CD4-positive, alpha-beta memory T cell (primary cell): ENCODE measurements at regions of chr16 and their contacts with region 1.

Region 1: GRCh38 chr16:25224731-25225319 is 8.1 kb downstream of the AQP8 start:
- DNase-seq: no peak
- H3K4me3 ChIP-seq: no peak overlapping the region
- H3K4me3 Mint-ChIP-seq: no peak overlapping the region
- H3K27ac ChIP-seq: no peak overlapping the region
- H3K27ac Mint-ChIP-seq: peak overlapping the region in 2 of 7 donors; percentile 54 to 85
- H3K4me1 ChIP-seq: no peaks in the 10 kb centered on the region
- H3K4me1 Mint-ChIP-seq: peaks cover 0 to 1% (median under 1%) of the 10 kb centered on the region in 4 donors
- H3K27me3 ChIP-seq: no peaks in the 10 kb centered on the region
- H3K27me3 Mint-ChIP-seq: no peaks in the 10 kb centered on the region

Region 2: GRCh38 chr16:24858219-24859041 is 366.4 kb before region 1 on chr16:
- CTCF ChIA-PET with region 1: no interaction called
- POLR2A ChIA-PET with region 1: no interaction called
- intact Hi-C with region 1: no loop called
- DNase-seq: peak; percentile 28 to 42 (median 34)
- H3K4me3 ChIP-seq: no peak overlapping the region
- H3K4me3 Mint-ChIP-seq: no peak overlapping the region
- H3K27ac ChIP-seq: no peak overlapping the region
- H3K27ac Mint-ChIP-seq: peak overlapping the region in 1 of 7 donors; percentile 14
- H3K4me1 ChIP-seq: no peaks in the 10 kb centered on the region
- H3K4me1 Mint-ChIP-seq: no peaks in the 10 kb centered on the region
- H3K27me3 ChIP-seq: no peaks in the 10 kb centered on the region
- H3K27me3 Mint-ChIP-seq: peaks cover 0 to 6% of the 10 kb centered on the region in 2 donors

Region 3: DNA sequence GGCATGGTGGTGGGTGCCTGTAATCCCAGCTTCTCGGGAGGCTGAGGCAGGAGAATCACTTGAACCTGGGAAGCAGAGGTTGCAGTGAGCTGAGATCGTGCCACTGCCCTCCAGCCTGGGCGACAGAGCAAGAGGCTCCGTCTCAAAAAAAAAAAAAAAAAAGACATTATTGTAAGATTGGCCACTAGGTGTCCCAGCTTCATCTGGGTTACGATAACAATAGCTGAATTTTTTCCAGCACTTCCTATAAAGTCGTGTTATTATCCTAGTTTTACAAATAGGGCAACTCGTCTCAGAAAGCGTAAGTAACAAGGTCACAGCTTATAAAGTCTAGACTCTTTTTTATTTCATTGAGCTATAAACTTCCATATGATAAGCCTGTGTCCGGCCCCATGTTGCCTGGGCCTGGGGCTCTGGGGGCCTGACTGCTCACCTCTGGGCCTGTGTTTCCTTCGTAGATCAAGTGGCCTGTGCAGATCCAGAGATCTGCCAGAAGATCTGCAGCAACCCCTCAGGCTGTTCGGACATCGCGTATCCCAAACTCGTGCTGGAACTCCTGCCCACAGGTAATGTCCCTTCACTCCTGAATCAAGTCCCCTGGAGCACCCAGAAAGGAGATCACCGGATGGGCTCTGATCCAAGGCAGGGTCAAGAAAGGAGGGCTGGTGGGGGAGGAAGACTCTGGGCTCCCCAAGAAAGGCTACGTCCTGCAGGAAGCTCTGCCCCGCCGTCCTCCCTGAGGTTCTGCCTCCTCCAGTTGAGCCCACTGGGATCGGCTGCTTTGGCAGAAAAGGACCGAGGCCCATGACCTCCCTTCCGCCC is 318.4 kb before region 1 on chr16:
- CTCF ChIA-PET with region 1: interaction called, 10 read pairs
- POLR2A ChIA-PET with region 1: no interaction called
- intact Hi-C with region 1: loop called (anchors 10 kb)
- DNase-seq: no peak
- H3K4me3 ChIP-seq: no peak overlapping the region
- H3K4me3 Mint-ChIP-seq: no peak overlapping the region
- H3K27ac ChIP-seq: no peak overlapping the region
- H3K27ac Mint-ChIP-seq: no peak overlapping the region
- H3K4me1 ChIP-seq: no peaks in the 10 kb centered on the region
- H3K4me1 Mint-ChIP-seq: peaks cover 0 to 4% (median 0%) of the 10 kb centered on the region in 4 donors
- H3K27me3 ChIP-seq: no peaks in the 10 kb centered on the region
- H3K27me3 Mint-ChIP-seq: no peaks in the 10 kb centered on the region

Region 4: DNA sequence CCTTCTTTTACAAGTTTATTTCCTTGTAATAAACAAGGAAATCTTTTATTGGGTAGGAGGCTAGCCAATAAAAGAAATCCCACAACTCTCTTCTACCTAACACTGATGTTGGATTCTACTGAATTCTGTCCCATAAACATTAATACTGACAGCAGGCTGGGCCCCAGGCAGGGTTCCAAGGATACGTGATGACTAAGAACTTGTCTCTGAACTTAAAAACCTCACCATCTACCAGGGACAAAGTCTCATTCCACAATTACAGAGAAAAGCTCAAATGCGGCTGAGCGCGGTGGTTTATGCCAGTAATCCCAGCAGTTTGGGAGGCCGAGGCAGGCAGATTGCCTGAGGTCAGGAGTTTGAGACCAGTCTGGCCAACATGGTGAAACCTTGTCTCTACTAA is 274.6 kb before region 1 on chr16:
- CTCF ChIA-PET with region 1: no interaction called
- POLR2A ChIA-PET with region 1: no interaction called
- intact Hi-C with region 1: no loop called
- DNase-seq: no peak
- H3K4me3 ChIP-seq: no peak overlapping the region
- H3K4me3 Mint-ChIP-seq: no peak overlapping the region
- H3K27ac ChIP-seq: no peak overlapping the region
- H3K27ac Mint-ChIP-seq: peak overlapping the region in 1 of 7 donors; percentile 11
- H3K4me1 ChIP-seq: no peaks in the 10 kb centered on the region
- H3K4me1 Mint-ChIP-seq: no peaks in the 10 kb centered on the region
- H3K27me3 ChIP-seq: no peaks in the 10 kb centered on the region
- H3K27me3 Mint-ChIP-seq: no peaks in the 10 kb centered on the region

Region 5: DNA sequence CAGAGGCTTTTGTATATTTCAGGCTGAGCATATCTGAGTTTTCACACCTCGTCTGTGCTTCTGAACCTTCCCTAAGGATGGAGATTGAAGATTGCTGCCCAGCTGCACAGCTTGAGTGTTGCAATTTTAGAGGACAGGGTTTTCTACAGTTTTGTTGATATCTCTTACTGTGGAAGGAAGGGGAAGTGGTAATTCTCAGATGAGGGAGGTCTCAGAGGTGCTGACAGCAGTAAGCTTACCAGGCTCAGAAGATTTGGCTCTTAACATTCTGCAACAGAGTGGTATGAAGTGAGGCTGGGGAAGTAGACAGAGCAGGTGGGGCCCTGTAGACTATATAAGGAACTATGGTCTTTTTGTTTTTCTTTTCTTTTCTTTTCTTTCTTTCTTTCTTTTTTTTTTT is 163.9 kb before region 1 on chr16:
- CTCF ChIA-PET with region 1: interaction called, 86 read pairs
- POLR2A ChIA-PET with region 1: interaction called, 6 read pairs
- intact Hi-C with region 1: no loop called
- DNase-seq: peak in 4 of 5 donors; percentile 53 to 69 (median 60)
- H3K4me3 ChIP-seq: no peak overlapping the region
- H3K4me3 Mint-ChIP-seq: peak overlapping the region; percentile 60 to 88 (median 77)
- H3K27ac ChIP-seq: peak overlapping the region; percentile 51
- H3K27ac Mint-ChIP-seq: peak overlapping the region; percentile 87 to 97 (median 91)
- H3K4me1 ChIP-seq: peaks cover 45% of the 10 kb centered on the region
- H3K4me1 Mint-ChIP-seq: peaks cover 34 to 56% (median 41%) of the 10 kb centered on the region in 4 donors
- H3K27me3 ChIP-seq: no peaks in the 10 kb centered on the region
- H3K27me3 Mint-ChIP-seq: no peaks in the 10 kb centered on the region

Region 6: DNA sequence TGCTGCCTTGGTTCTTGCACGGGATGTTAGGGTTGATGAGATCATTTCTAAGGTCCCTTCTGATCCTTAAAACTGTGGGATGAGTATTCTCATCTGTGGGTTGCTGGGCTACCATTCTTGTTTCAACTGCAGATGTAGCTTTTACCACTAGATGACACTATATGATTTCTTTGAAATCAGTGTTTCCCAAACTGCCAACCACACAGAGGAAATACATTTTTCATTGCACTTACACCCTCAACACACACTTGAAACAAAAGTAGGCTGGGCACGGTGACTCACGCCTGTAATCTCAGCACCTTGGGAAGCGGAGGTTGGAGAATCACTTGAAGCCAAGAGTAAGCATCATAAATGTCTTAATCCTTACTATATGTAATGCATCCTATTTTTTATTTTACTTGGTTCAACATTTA is 98.0 kb before region 1 on chr16:
- CTCF ChIA-PET with region 1: interaction called, 28 read pairs
- POLR2A ChIA-PET with region 1: no interaction called
- intact Hi-C with region 1: loop called (anchors 1 kb)
- DNase-seq: peak in 4 of 5 donors; percentile 12 to 28 (median 23)
- H3K4me3 ChIP-seq: no peak overlapping the region
- H3K4me3 Mint-ChIP-seq: no peak overlapping the region
- H3K27ac ChIP-seq: no peak overlapping the region
- H3K27ac Mint-ChIP-seq: peak overlapping the region in 6 of 7 donors; percentile 19 to 79 (median 56)
- H3K4me1 ChIP-seq: peaks cover 17% of the 10 kb centered on the region
- H3K4me1 Mint-ChIP-seq: peaks cover 21 to 52% (median 32%) of the 10 kb centered on the region in 4 donors
- H3K27me3 ChIP-seq: no peaks in the 10 kb centered on the region
- H3K27me3 Mint-ChIP-seq: no peaks in the 10 kb centered on the region

Region 7: DNA sequence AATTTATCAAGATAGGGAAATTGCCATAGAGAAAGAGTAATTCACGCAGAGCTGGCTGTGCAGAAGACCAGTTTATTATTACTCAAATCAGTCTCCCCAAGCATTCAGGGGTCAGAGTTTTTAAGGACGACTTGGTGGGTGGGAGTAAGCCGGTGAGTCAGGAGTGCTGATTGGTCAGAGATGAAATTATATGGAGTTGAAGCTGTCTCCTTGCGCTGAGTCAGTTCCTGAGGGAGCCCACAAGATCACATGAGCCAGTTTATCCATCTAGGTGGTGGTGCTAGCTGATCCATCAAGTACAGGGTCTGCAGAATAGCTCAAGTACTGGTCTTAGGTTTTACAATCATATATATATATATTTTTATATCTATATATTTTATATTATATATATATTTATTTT is 14.1 kb before region 1 on chr16:
- CTCF ChIA-PET with region 1: interaction called, 21 read pairs
- POLR2A ChIA-PET with region 1: no interaction called
- intact Hi-C with region 1: no loop called
- DNase-seq: no peak
- H3K4me3 ChIP-seq: no peak overlapping the region
- H3K4me3 Mint-ChIP-seq: no peak overlapping the region
- H3K27ac ChIP-seq: no peak overlapping the region
- H3K27ac Mint-ChIP-seq: no peak overlapping the region
- H3K4me1 ChIP-seq: no peaks in the 10 kb centered on the region
- H3K4me1 Mint-ChIP-seq: no peaks in the 10 kb centered on the region
- H3K27me3 ChIP-seq: no peaks in the 10 kb centered on the region
- H3K27me3 Mint-ChIP-seq: no peaks in the 10 kb centered on the region

Region 8: DNA sequence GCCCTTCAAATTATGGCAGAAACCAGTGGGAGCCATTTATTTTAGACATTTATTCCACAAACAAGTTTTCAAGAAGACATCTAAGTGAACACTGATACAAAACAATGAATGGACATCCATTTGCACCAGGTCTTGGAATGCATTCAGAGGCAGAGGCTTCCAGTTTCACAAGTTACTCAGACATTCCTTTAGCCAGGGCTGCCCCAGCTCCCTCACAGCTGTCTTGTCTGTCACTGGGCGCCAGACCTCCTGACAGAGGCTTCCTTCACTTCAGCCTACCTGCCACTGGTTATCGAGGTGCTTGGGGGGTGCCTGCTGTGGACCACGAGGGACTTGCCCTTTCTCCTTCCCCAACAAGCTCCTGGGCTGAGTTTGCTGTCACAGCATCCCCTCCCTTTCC is 11.2 kb after region 1 on chr16:
- CTCF ChIA-PET with region 1: interaction called, 45 read pairs
- POLR2A ChIA-PET with region 1: no interaction called
- intact Hi-C with region 1: no loop called
- DNase-seq: no peak
- H3K4me3 ChIP-seq: no peak overlapping the region
- H3K4me3 Mint-ChIP-seq: no peak overlapping the region
- H3K27ac ChIP-seq: no peak overlapping the region
- H3K27ac Mint-ChIP-seq: no peak overlapping the region
- H3K4me1 ChIP-seq: no peaks in the 10 kb centered on the region
- H3K4me1 Mint-ChIP-seq: peaks cover 0 to 6% (median 3%) of the 10 kb centered on the region in 4 donors
- H3K27me3 ChIP-seq: no peaks in the 10 kb centered on the region
- H3K27me3 Mint-ChIP-seq: no peaks in the 10 kb centered on the region